ENCODE measurements at regions of chr16 and their contacts with region 1.

Region 1: GRCh38 chr16:30657866-30658730 is at the start of gene FBRS:
- DNase-seq: peak; percentile 100
- H3K4me3 ChIP-seq: peak within 1 kb of the TSS; percentile 70 to 93
- H3K4me3 Mint-ChIP-seq: peak within 1 kb of the TSS; percentile 92 to 99 (median 96)
- H3K27ac ChIP-seq: peak within 1 kb of the TSS; percentile 99
- H3K27ac Mint-ChIP-seq: peak within 1 kb of the TSS; percentile 98 to 100 (median 100)
- H3K4me1 ChIP-seq: peaks cover 43% of the 10 kb centered on the region
- H3K4me1 Mint-ChIP-seq: peaks cover 25 to 52% (median 39%) of the 10 kb centered on the region in 4 donors
- H3K27me3 ChIP-seq: no peaks in the 10 kb centered on the region
- H3K27me3 Mint-ChIP-seq: no peaks in the 10 kb centered on the region
- total RNA-seq, gene FBRS: 164 to 172 TPM

Region 2: DNA sequence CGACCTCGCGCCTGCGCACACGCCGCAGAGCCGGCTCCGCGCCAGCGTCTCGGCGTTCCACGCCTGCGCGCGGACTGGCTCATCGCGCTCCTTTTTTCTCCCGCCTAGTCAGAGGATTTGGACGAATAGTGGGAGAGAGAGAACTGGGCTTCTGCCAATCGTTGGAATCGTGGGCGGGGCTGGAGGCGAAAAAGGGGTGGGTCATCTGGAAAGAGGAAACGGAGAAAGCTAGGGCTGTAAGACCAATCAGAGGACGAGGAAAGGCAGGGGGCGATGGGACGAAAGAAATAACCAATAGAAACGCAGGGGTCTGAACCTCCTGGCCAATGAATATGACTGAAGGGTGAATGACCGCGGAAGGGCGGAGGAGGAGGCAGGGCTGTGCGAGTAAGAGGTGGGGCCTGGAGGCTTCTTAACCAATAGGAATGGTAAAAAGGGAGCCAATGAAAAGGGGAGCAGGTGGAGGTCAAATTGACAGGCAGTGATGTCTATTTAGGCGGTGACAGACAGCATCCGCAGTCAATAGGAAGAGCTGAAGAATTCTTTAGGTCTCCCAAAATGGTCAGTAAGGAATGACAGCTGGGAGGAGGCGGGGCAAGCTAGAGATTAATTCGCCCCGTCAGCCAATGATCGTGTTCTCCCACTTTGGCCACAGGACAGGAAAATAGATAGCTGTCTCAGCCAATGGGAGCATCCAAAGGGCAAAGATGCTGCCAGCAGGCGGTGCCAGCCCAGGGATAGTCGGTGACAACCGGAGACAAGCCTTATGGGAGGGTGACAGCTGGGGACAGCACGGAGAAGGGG is 287.5 kb before region 1 on chr16 and contains the start of gene TBC1D10B:
- CTCF ChIA-PET with region 1: no interaction called
- POLR2A ChIA-PET with region 1: no interaction called
- intact Hi-C with region 1: loop called (anchors 1 kb)
- DNase-seq: peak; percentile 99 to 100 (median 100)
- H3K4me3 ChIP-seq: peak within 1 kb of the TSS; percentile 67 to 88
- H3K4me3 Mint-ChIP-seq: peak within 1 kb of the TSS; percentile 87 to 94 (median 90)
- H3K27ac ChIP-seq: peak within 1 kb of the TSS; percentile 72
- H3K27ac Mint-ChIP-seq: peak within 1 kb of the TSS; percentile 83 to 99 (median 95)
- H3K4me1 ChIP-seq: peaks cover 46% of the 10 kb centered on the region
- H3K4me1 Mint-ChIP-seq: peaks cover 43 to 60% (median 49%) of the 10 kb centered on the region in 4 donors
- H3K27me3 ChIP-seq: no peaks in the 10 kb centered on the region
- H3K27me3 Mint-ChIP-seq: peaks cover 0 to 2% of the 10 kb centered on the region in 2 donors
- total RNA-seq, gene TBC1D10B: 47.0 to 55.3 TPM

Region 3: DNA sequence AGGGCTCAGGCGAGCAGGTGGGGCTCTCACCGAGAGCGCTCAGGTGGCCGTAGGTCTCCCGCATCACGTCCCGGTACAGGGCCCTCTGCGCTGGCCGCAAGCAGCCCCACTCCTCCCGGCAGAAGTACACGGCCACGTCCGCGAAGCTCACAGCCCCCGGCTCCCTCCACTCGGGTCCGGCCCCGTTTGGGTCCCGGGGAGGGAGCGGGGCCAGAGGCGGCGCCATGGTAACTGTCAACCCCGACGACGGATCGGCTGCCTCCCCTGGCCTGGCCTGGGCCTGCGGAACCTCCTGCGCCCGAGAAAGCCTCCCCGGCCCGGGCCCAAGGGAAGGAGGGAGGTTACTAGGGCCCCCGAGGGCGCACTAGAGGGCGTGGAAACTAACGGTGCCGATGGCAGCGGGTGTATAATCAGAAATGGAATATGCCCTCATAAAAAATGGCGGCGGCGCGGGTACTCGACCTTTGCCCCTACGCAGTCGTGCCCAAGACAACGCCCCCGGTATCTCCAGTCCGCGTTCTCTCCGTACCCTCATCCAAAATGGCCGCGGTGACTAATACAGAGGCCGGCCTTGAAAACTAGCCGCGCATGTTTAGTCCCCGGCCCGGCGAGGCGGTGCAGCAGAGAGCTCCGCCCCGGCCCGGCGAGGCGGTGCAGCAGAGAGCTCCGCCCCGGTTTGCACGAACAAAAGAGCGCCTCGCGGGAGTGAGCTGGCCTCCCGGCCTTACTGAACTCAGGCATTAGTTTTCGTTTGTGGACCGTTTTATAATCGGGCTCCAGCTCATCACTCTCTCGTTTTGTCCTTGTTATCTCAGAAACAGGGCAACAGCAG is 99.9 kb before region 1 on chr16 and contains the start of gene ZNF764:
- CTCF ChIA-PET with region 1: no interaction called
- POLR2A ChIA-PET with region 1: interaction called, 24 read pairs
- intact Hi-C with region 1: loop called (anchors 2 kb)
- DNase-seq: peak; percentile 94 to 98 (median 96)
- H3K4me3 ChIP-seq: peak within 1 kb of the TSS; percentile 58 to 75
- H3K4me3 Mint-ChIP-seq: peak within 1 kb of the TSS; percentile 88 to 94 (median 92)
- H3K27ac ChIP-seq: peak within 1 kb of the TSS; percentile 95
- H3K27ac Mint-ChIP-seq: peak within 1 kb of the TSS; percentile 93 to 97 (median 95)
- H3K4me1 ChIP-seq: peaks cover 54% of the 10 kb centered on the region
- H3K4me1 Mint-ChIP-seq: peaks cover 19 to 55% (median 37%) of the 10 kb centered on the region in 4 donors
- H3K27me3 ChIP-seq: no peaks in the 10 kb centered on the region
- H3K27me3 Mint-ChIP-seq: no peaks in the 10 kb centered on the region
- total RNA-seq, gene ZNF764: 28.9 to 29.3 TPM

Region 4: DNA sequence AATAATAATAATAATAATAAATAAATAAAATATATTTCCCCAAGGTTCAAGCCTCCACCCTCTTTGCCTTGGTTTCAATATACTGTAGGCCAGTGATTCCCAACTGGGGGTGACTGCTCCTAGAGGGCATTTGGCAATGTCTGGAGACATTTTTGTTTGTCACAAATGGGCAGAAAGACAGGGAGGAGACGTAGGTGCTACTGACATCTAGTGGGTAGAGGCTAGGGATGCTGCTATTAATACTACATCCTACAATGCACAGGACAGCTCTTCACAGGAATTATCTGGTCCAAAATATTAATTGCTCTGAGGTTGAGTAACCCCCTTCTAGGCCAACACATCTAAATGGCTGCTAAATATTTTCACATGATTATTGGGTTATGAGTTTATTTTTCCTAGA is 20.2 kb before region 1 on chr16:
- CTCF ChIA-PET with region 1: interaction called, 5 read pairs
- POLR2A ChIA-PET with region 1: interaction called, 25 read pairs
- intact Hi-C with region 1: loop called (anchors 1 kb)
- DNase-seq: peak in 4 of 5 donors; percentile 35 to 54 (median 36)
- H3K4me3 ChIP-seq: no peak overlapping the region
- H3K4me3 Mint-ChIP-seq: no peak overlapping the region
- H3K27ac ChIP-seq: no peak overlapping the region
- H3K27ac Mint-ChIP-seq: peak overlapping the region in 2 of 7 donors; percentile 53 to 68
- H3K4me1 ChIP-seq: peaks cover 13% of the 10 kb centered on the region
- H3K4me1 Mint-ChIP-seq: peaks cover 2 to 16% (median 10%) of the 10 kb centered on the region in 4 donors
- H3K27me3 ChIP-seq: no peaks in the 10 kb centered on the region
- H3K27me3 Mint-ChIP-seq: no peaks in the 10 kb centered on the region

Region 5: DNA sequence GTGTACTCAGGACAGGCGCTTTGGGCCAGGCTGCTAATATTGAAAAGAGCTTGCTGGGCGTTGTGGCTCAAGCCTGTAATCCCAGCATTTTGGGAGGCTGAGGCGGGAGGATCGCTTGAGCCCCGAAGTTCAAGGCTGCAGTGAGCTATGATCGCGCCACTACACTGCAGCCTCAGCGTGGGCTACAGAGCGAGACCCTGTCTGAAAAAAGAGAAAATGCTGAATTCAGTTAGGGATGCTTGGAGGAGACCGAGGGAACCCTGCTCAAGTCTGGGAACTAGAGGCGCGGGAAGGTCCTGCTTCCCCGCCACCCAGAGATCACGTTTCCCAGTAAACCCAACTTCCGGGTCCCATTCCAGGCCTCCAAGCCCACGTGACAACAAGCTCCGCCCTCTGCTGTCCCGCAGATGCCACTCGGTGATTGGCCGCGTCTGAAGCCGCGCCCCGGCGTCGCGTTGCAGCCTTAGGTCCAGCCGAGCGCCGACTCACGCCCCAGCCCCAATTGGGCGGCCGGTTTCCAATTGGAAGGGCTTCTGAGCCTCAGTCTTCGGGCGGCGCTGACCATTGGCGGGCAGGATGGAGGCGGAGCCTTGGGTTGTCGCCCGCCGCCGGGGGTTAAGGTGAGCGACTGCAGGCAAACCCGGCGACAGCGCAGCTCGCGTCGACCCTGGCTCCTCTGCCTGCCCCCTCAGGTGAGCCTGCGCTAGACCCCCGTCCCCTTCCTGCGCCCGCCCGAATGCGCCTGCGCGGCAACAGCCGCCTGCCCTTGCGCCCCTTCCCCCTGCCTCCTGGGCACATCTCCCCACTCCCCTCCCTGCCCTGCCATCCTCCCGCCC is 89.9 kb after region 1 on chr16 and contains the start of gene PHKG2:
- CTCF ChIA-PET with region 1: no interaction called
- POLR2A ChIA-PET with region 1: interaction called, 25 read pairs
- intact Hi-C with region 1: loop called (anchors 5 kb)
- DNase-seq: peak; percentile 94 to 96 (median 95)
- H3K4me3 ChIP-seq: peak within 1 kb of the TSS; percentile 65 to 71
- H3K4me3 Mint-ChIP-seq: peak within 1 kb of the TSS; percentile 89 to 97 (median 91)
- H3K27ac ChIP-seq: peak within 1 kb of the TSS; percentile 60
- H3K27ac Mint-ChIP-seq: peak within 1 kb of the TSS; percentile 73 to 94 (median 89)
- H3K4me1 ChIP-seq: peaks cover 7% of the 10 kb centered on the region
- H3K4me1 Mint-ChIP-seq: peaks cover 14 to 33% (median 20%) of the 10 kb centered on the region in 4 donors
- H3K27me3 ChIP-seq: no peaks in the 10 kb centered on the region
- H3K27me3 Mint-ChIP-seq: no peaks in the 10 kb centered on the region
- total RNA-seq, gene PHKG2: 54.1 to 54.9 TPM

Region 6: DNA sequence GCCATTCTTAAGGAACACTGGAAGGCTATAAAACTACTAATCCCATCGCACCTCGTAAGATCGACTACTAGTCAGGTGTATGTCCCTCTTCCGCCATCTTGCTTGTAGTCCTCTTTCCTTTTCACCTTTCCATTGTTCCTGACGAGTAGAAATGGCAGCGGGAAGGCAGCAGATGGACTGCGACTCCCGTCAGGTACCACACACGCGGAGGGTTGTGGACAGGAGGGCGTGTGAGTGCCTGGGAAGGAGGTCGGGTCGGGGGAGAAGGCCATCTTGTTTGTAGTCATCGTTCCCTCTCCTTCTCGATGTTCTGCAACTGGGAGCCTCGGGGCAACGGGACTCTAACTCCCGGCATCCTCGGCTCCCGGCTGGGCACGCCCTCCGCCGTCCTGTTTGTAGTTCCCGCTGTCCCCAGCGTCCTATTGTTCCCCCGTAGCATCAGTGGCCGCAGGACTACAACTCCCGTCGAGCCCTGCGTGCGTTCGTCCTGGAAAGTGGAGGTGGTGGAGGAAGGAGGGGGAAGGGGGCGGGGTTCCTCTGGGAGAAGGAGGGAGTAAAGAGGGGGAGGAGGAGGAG is 264.9 kb after region 1 on chr16:
- CTCF ChIA-PET with region 1: no interaction called
- POLR2A ChIA-PET with region 1: interaction called, 3 read pairs
- intact Hi-C with region 1: loop called (anchors 1 kb)
- DNase-seq: peak; percentile 95 to 98 (median 97)
- H3K4me3 ChIP-seq: peak overlapping the region; percentile 73 to 92
- H3K4me3 Mint-ChIP-seq: peak overlapping the region; percentile 95 to 100 (median 99)
- H3K27ac ChIP-seq: peak overlapping the region; percentile 90
- H3K27ac Mint-ChIP-seq: peak overlapping the region; percentile 98 to 100 (median 99)
- H3K4me1 ChIP-seq: peaks cover 12% of the 10 kb centered on the region
- H3K4me1 Mint-ChIP-seq: peaks cover 7 to 33% (median 17%) of the 10 kb centered on the region in 4 donors
- H3K27me3 ChIP-seq: no peaks in the 10 kb centered on the region
- H3K27me3 Mint-ChIP-seq: no peaks in the 10 kb centered on the region

Measured in CD4-positive, alpha-beta memory T cell (primary cell).